ENCODE measurements at regions of chr14 and their contacts with region 1.

Region 1: DNA sequence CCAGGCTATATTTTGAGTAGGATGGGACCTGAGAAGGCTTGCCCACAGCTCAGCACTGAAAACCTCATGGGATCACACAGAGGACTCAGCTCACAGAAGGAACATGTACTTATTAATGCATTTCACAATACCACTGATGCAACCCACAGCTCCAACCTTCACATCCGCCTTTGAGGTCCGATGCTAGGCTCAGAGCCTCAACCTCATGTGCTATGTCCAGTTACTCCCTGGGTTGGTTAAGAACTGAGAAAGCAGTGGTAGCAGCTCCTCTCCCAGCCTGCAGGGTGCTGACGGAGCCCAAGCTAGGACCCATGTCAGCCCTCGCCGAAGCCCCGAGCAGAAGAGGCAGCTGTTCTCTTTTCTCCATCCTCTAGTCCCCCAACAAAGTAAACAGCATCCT is 52.9 kb downstream of the SPTB start:
- DNase-seq: no peak
- H3K4me3 ChIP-seq: no peak overlapping the region
- H3K27ac ChIP-seq: no peak overlapping the region
- H3K4me1 ChIP-seq: no peaks in the 10 kb centered on the region
- H3K27me3 ChIP-seq: no peaks in the 10 kb centered on the region
- CTCF ChIP-seq: no peak
- POLR2A ChIP-seq: no peak

Region 2: DNA sequence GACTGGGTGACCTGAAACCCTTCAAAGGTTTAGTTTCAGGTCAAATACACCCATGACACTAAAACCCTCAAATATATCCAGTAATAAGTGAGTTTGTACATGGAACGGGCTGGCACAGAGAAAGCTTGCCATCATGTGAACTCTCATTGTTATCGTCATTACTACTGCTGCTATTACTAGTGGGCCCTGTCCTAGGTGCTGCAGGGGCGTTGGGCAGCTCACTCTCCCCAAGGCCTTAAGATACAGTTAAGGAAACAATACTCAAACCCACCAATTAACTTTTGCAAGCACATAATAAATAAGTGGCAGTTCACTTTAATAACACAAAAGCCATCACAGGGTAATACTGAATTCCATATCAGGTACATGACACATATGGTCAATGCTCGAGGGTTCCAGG is 18.4 kb before region 1 on chr14:
- intact Hi-C with region 1: loop called (anchors 1 kb)
- DNase-seq: no peak
- H3K4me3 ChIP-seq: no peak overlapping the region
- H3K27ac ChIP-seq: no peak overlapping the region
- H3K4me1 ChIP-seq: no peaks in the 10 kb centered on the region
- H3K27me3 ChIP-seq: no peaks in the 10 kb centered on the region
- CTCF ChIP-seq: no peak
- POLR2A ChIP-seq: no peak

Region 3: DNA sequence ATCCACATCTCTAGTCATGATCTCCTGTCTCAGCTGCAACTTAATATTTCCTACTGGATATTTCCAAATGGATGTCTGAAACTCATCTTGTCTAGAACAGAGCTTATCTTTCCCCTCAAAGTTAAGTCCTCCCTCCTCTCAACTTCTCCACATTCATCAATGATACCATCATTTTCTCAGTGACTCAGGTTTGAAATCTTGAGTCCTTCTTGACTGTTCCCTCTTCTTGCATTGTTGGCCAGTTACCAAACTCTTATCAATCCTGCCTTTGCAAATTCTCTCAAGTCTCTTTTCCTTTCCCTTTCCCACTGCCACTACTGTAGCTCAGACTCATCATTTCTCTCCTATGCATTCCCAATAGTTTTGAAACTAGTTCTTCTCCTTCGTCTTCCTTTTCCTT is 73.1 kb after region 1 on chr14:
- intact Hi-C with region 1: loop called (anchors 5 kb)
- DNase-seq: no peak
- H3K4me3 ChIP-seq: no peak overlapping the region
- H3K27ac ChIP-seq: no peak overlapping the region
- H3K4me1 ChIP-seq: no peaks in the 10 kb centered on the region
- H3K27me3 ChIP-seq: no peaks in the 10 kb centered on the region
- CTCF ChIP-seq: no peak
- POLR2A ChIP-seq: no peak